ENCODE measurements at regions of chr13 and their contacts with region 1.

Region 1: GRCh38 chr13:98972627-98973026 is 5.2 kb downstream of the DOCK9 start:
- DNase-seq: peak; percentile 75 to 82
- H3K4me3 ChIP-seq: no peak overlapping the region
- H3K4me3 Mint-ChIP-seq: peak overlapping the region; percentile 64
- H3K27ac Mint-ChIP-seq: peak overlapping the region; percentile 90
- H3K4me1 ChIP-seq: peaks cover 65% of the 10 kb centered on the region
- H3K4me1 Mint-ChIP-seq: peaks cover 54% of the 10 kb centered on the region
- H3K27me3 ChIP-seq: no peaks in the 10 kb centered on the region
- H3K27me3 Mint-ChIP-seq: no peaks in the 10 kb centered on the region
- CTCF ChIP-seq: no peak

Region 2: GRCh38 chr13:98947925-98948324 is 24.7 kb before region 1 on chr13:
- CTCF ChIA-PET with region 1: interaction called, 6 read pairs
- POLR2A ChIA-PET with region 1: no interaction called
- intact Hi-C with region 1: loop called (anchors 2 kb)
- DNase-seq: no peak
- H3K4me3 ChIP-seq: no peak overlapping the region
- H3K4me3 Mint-ChIP-seq: no peak overlapping the region
- H3K27ac Mint-ChIP-seq: no peak overlapping the region
- H3K4me1 ChIP-seq: peaks cover 35% of the 10 kb centered on the region
- H3K4me1 Mint-ChIP-seq: peaks cover 41% of the 10 kb centered on the region
- H3K27me3 ChIP-seq: no peaks in the 10 kb centered on the region
- H3K27me3 Mint-ChIP-seq: no peaks in the 10 kb centered on the region
- CTCF ChIP-seq: no peak

Region 3: DNA sequence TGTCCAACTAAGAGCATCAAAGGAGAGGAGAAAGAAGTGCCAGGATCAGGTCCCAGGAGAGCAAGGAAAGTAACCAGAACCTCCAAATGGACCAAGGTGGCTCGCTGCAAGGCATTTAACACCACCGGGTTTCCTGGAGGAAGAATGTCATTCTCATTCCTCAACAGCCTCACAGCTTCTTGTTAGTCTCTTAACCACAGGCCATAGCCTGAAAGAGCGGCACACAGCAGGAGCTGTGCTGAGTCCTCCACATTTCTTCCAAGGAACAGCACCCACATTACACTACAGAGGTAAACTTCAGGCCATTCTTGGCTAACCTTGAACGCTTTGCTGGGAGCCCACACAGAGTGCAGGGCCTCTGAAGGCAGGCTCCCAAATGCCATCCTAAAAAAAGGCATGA is 18.3 kb before region 1 on chr13:
- CTCF ChIA-PET with region 1: no interaction called
- POLR2A ChIA-PET with region 1: no interaction called
- intact Hi-C with region 1: loop called (anchors 2 kb)
- DNase-seq: no peak
- H3K4me3 ChIP-seq: no peak overlapping the region
- H3K4me3 Mint-ChIP-seq: no peak overlapping the region
- H3K27ac Mint-ChIP-seq: peak overlapping the region; percentile 17
- H3K4me1 ChIP-seq: peaks cover 21% of the 10 kb centered on the region
- H3K4me1 Mint-ChIP-seq: peaks cover 31% of the 10 kb centered on the region
- H3K27me3 ChIP-seq: no peaks in the 10 kb centered on the region
- H3K27me3 Mint-ChIP-seq: no peaks in the 10 kb centered on the region
- CTCF ChIP-seq: no peak

Region 4: DNA sequence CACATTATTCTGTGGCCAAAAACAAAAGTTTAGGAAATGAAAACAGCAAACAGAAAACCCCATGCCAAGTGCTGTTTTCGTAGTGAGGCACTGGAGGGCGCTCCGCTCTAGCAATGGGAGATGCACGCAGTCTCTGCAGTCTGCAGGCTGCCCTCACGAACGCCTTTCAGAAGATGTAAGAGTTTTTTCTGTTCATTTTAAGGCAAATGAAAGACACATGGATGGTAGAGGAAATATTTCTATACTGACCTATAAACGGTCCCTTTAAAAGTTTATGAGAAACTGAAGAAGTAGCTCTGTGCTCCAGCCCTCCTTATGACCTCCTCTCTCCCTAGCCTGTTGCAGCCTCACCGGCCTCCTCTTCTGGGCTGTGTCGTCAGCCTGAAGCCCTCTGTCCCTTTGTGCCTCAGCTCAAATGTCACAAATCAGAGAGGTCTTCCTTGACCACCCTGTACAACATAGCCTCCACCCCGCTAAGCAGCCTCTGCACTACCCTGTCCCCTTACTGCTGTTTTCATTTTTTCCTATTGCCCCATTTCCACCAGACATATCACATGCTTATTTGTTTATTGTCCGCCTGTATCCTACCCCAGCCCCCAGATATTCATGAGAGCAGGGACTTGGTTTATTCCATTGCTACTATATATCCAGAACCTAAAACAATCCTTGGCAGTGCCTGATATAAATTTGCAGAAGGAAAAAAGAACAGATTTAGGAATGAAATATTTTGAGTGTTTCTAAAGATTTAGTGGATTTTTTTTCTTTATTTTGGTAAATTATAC is 645.0 kb after region 1 on chr13:
- CTCF ChIA-PET with region 1: no interaction called
- POLR2A ChIA-PET with region 1: no interaction called
- intact Hi-C with region 1: no loop called
- DNase-seq: peak in 1 of 2 experiments; percentile 15
- H3K4me3 ChIP-seq: no peak overlapping the region
- H3K4me3 Mint-ChIP-seq: no peak overlapping the region
- H3K27ac Mint-ChIP-seq: no peak overlapping the region
- H3K4me1 ChIP-seq: peaks cover 4% of the 10 kb centered on the region; the same call in 1 of the 2 replicates
- H3K4me1 Mint-ChIP-seq: no peaks in the 10 kb centered on the region
- H3K27me3 ChIP-seq: no peaks in the 10 kb centered on the region
- H3K27me3 Mint-ChIP-seq: no peaks in the 10 kb centered on the region
- CTCF ChIP-seq: peak; percentile 35 to 56

Measured in Caco-2 (cell line).